Common myeloid progenitor, CD34-positive (primary cell): ENCODE measurements at regions of chr6 and their contacts with region 1.

Region 1: DNA sequence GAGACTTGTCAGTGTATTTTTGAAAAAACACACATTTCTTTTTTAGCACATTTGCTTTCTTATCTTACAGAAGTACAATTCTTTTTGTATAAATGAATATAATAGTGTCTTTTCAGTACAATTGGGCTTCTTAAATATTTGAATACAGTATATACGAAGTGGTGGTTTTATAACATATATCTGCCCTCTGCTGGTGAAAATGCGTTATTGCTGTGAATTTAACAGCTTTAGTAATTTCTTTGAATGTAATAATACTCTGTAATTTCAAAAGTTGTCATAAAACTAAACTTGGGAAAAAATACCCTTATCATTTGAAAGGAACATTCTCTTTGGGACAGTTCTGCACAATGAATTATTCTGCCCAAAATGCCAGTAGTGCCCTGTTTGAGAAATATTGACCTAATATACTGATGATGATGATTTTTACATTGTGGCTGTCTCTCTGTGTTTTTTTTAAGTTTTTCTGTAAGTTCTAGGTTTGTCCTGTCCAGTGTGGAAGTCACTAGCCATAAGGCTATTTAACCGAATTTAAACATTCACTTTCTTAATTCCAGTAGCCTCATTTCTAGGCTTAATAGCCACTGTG is 19.0 kb downstream of the SMAP1 start:
- DNase-seq: peak; percentile 36 to 64 (median 57)
- H3K4me3 ChIP-seq: no peak overlapping the region
- H3K27ac ChIP-seq: no peak overlapping the region
- H3K4me1 ChIP-seq: no peaks in the 10 kb centered on the region
- H3K27me3 ChIP-seq: no peaks in the 10 kb centered on the region

Region 2: GRCh38 chr6:70479236-70479635 is 207.4 kb before region 1 on chr6:
- CTCF ChIA-PET with region 1: no interaction called
- POLR2A ChIA-PET with region 1: no interaction called
- DNase-seq: no peak
- H3K4me3 ChIP-seq: no peak overlapping the region
- H3K27ac ChIP-seq: no peak overlapping the region
- H3K4me1 ChIP-seq: no peaks in the 10 kb centered on the region
- H3K27me3 ChIP-seq: no peaks in the 10 kb centered on the region

Region 3: DNA sequence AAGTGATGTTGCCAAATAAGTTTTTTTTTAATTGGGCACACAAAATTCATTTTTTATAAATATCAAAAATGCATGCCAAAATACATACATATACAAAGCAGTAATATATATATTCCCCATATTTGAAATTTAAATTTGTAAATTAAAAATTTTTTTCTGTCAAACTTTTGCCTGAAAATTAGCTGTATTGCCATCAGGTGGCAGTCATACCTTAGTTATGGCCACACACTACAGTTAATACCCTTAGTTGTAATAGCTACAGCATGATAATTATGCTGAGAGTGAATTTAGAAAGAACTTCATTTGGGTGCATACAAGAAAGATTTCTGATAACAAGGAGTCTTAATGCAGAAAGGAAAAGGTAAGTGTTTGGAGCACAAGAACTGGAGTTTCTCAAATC is 166.1 kb before region 1 on chr6:
- CTCF ChIA-PET with region 1: interaction called, 10 read pairs
- POLR2A ChIA-PET with region 1: no interaction called
- DNase-seq: peak; percentile 15 to 52 (median 47)
- H3K4me3 ChIP-seq: no peak overlapping the region
- H3K27ac ChIP-seq: no peak overlapping the region
- H3K4me1 ChIP-seq: no peaks in the 10 kb centered on the region
- H3K27me3 ChIP-seq: no peaks in the 10 kb centered on the region

Region 4: DNA sequence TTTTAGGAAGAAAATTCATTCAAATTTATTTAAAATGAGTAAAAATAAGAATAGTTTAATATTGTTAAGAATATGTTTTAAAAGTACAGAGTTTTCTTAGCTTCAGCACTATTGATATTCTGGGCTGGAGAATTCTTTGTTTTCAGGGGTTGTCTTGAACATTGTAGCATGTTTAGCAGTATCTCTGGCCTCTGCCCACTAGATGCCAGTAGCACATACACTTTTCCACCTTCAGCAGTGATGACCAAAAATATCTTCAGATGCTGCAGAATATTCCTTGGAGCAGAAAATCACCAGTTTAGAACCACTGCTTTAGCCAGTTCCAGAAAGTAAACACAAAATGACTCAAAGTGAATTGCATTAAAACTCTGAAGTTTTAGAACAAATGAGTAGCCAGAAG is 139.3 kb before region 1 on chr6:
- CTCF ChIA-PET with region 1: interaction called, 16 read pairs
- POLR2A ChIA-PET with region 1: no interaction called
- DNase-seq: peak; percentile 12 to 33 (median 30)
- H3K4me3 ChIP-seq: no peak overlapping the region
- H3K27ac ChIP-seq: no peak overlapping the region
- H3K4me1 ChIP-seq: no peaks in the 10 kb centered on the region
- H3K27me3 ChIP-seq: no peaks in the 10 kb centered on the region

Region 5: GRCh38 chr6:70673054-70673453 is 13.6 kb before region 1 on chr6:
- CTCF ChIA-PET with region 1: interaction called, 22 read pairs
- POLR2A ChIA-PET with region 1: no interaction called
- DNase-seq: no peak
- H3K4me3 ChIP-seq: no peak overlapping the region
- H3K27ac ChIP-seq: no peak overlapping the region
- H3K4me1 ChIP-seq: peaks cover 0 to 11% (median 3%) of the 10 kb centered on the region in 4 experiments
- H3K27me3 ChIP-seq: no peaks in the 10 kb centered on the region